ENCODE measurements at regions of chr6 and their contacts with region 1.

Region 1: DNA sequence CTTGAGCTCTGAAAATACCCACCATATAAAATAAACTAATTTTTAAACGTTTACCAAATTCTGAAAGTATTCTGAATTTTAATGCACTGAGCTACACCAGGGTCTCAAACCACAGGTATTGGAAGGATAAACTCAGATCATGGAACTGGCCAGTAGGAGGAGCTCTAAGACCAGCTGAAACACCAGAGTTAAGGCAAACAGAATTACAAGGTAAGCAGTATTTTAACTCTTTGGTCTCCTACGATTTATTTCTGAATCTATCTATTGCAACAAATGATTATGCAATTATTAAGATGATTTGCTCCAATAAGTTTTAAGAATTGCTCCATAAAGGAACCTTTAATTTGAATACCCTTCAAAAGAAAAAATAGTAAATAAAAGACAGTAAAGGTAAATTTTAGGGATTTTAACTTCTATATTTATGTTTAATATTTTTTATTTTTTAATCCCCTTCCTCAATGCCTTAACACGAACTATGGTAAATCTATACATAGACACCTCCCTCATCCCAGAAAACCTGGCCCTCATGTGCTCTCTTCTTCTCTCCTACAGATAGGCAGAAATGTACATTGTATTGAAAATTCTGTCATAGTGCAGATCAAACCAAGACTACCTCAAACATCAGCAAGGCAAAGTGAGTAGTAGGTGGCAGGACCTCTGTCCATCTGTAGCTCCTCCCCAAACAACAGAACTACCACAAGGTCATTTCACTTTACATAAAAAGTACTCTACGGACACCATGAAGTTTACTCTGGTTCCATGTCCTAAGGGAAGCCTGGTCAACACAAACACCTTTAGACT is 58.4 kb downstream of the SMLR1 start:
- DNase-seq: peak in 1 of 2 donors; percentile 83
- ATAC-seq: peak in 7 of 8 donors; percentile 81 to 92 (median 88)
- H3K4me3 ChIP-seq: no peak overlapping the region
- H3K27ac ChIP-seq: no peak overlapping the region
- H3K4me1 ChIP-seq: peaks cover 0 to 7% (median 0%) of the 10 kb centered on the region in 9 donors
- H3K27me3 ChIP-seq: no peaks in the 10 kb centered on the region
- CTCF ChIP-seq: peak; percentile 74 to 96 (median 89)

Region 2: DNA sequence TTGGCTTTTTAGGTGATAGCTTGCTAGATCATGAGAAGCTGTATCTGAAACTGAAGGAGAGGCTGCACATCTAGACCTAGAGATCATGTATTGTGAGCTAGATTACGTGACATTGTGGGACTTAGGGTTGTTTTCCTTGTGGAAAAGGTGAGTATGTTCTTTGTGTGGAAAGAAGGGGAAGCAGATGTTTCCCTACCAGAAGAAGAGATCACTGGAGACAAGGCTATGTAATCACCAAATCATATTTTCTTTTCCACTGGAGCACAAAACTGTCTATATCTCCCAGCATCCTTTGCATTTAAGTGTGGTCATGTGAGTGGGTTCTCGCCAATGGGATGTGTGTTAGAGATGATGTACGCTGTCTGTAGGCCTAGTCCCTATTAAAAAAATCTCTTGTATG is 184.5 kb after region 1 on chr6:
- intact Hi-C with region 1: no loop called
- DNase-seq: no peak
- ATAC-seq: no peak
- H3K4me3 ChIP-seq: no peak overlapping the region
- H3K27ac ChIP-seq: no peak overlapping the region
- H3K4me1 ChIP-seq: no peaks in the 10 kb centered on the region
- H3K27me3 ChIP-seq: no peaks in the 10 kb centered on the region
- CTCF ChIP-seq: no peak

Region 3: DNA sequence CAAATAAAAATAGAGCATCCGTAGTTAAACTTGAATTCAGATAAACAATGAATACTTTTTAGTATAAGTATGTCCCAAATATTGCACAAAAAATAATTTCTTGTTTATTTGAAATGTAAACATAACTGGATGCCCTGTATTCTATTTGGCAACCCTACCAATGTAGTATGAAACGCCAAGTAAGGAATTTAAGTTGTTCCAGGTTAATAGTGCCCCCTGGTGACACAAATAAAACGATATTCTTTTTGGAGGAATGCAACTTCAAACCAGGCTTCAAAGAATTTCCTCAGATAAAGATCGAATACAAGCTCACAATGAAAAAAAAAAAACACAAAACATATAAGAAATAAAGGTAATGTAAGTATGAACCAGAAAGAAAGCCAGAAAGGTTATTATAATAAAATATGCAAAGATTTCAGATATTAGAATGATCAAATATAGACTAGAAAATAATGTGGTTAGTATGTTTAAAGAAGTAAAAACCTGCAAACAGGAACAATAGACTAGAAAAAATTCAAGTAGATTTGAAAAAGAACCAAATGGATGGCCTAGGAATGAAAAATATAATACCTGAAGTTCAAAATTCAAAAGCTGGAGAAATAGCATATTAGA is 231.3 kb after region 1 on chr6:
- intact Hi-C with region 1: loop called (anchors 1 to 5 kb)
- DNase-seq: peak in 1 of 2 donors; percentile 11
- ATAC-seq: peak in 1 of 8 donors; percentile 54
- H3K4me3 ChIP-seq: no peak overlapping the region
- H3K27ac ChIP-seq: no peak overlapping the region
- H3K4me1 ChIP-seq: no peaks in the 10 kb centered on the region
- H3K27me3 ChIP-seq: no peaks in the 10 kb centered on the region
- CTCF ChIP-seq: peak; percentile 20 to 71 (median 53)

Region 4: GRCh38 chr6:131627724-131628682 is 742.4 kb after region 1 on chr6 and contains the start of gene MED23:
- intact Hi-C with region 1: loop called in 1 of 10 experiments (anchors 10 kb)
- DNase-seq: peak; percentile 94 to 95
- ATAC-seq: peak; percentile 97 to 99 (median 98)
- H3K4me3 ChIP-seq: peak within 1 kb of the TSS; percentile 61 to 92 (median 78)
- H3K27ac ChIP-seq: peak within 1 kb of the TSS in 9 of 10 donors; percentile 48 to 91 (median 71)
- H3K4me1 ChIP-seq: peaks cover 0 to 26% (median 16%) of the 10 kb centered on the region in 9 donors
- H3K27me3 ChIP-seq: no peaks in the 10 kb centered on the region
- CTCF ChIP-seq: peak; percentile 91 to 100 (median 97)
- total RNA-seq, gene MED23: 9.8 to 14.1 (median 11.5) TPM

Measured in heart right ventricle (tissue), 16 donors.